ENCODE measurements at regions of chr6 and their contacts with region 1.

Region 1: DNA sequence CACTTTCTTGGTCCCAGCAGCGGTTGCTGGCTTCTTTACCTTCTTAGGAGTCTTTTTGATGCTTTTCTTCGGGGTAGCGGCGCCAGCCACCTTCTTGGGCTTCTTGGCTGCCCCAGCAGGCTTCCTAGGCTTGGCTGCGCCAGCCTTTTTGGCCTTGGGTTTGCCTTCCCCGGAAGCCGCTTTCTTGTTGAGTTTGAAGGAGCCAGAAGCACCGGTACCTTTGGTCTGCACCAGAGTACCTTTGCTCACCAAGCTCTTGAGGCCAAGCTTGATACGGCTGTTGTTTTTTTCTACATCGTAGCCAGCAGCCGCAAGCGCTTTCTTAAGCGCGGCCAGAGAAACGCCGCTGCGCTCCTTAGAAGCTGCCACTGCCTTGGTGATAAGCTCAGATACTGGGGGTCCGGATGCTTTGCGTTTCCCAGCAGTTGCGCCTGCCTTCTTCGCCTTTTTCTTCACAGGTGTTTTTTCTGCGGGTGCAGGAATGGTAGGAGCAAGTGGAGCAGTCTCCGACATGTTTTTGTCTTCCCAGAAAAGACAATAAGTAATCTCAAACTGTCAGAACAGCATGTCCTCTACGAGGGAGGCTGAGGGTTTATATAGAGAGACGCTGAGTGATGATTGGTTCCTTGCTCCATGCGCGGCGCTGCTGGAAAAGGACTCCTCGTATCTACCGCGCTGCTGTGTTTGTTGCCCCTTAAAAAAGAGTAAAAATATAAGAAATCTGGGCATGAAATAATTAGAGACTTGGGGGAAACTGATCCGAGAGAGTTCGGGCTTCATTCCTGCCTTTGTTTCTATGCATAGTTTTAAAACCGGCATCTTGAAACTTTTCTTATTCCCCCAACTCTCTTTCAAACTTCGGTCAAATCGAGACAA is 130.3 kb upstream of the BTN3A2 start:
- DNase-seq: peak; percentile 46 to 96 (median 67)
- ATAC-seq: peak; percentile 73
- H3K4me3 ChIP-seq: peak overlapping the region; percentile 66
- H3K4me3 Mint-ChIP-seq: peak overlapping the region; percentile 100
- H3K27ac ChIP-seq: peak overlapping the region; percentile 78 to 87
- H3K27ac Mint-ChIP-seq: peak overlapping the region; percentile 99
- H3K4me1 ChIP-seq: peaks cover 19% of the 10 kb centered on the region
- H3K4me1 Mint-ChIP-seq: peaks cover 42% of the 10 kb centered on the region
- H3K27me3 ChIP-seq: no peaks in the 10 kb centered on the region
- H3K27me3 Mint-ChIP-seq: peaks cover 8% of the 10 kb centered on the region
- CTCF ChIP-seq: no peak

Region 2: GRCh38 chr6:25907475-25908014 is 327.1 kb before region 1 on chr6:
- CTCF ChIA-PET with region 1: no interaction called
- POLR2A ChIA-PET with region 1: no interaction called
- intact Hi-C with region 1: no loop called
- DNase-seq: no peak
- ATAC-seq: no peak
- H3K4me3 ChIP-seq: no peak overlapping the region
- H3K4me3 Mint-ChIP-seq: no peak overlapping the region
- H3K27ac ChIP-seq: no peak overlapping the region
- H3K27ac Mint-ChIP-seq: no peak overlapping the region
- H3K4me1 ChIP-seq: no peaks in the 10 kb centered on the region
- H3K4me1 Mint-ChIP-seq: no peaks in the 10 kb centered on the region
- H3K27me3 ChIP-seq: peaks cover 0 to 5% of the 10 kb centered on the region in 2 experiments
- H3K27me3 Mint-ChIP-seq: peaks cover 19% of the 10 kb centered on the region
- CTCF ChIP-seq: no peak

Region 3: DNA sequence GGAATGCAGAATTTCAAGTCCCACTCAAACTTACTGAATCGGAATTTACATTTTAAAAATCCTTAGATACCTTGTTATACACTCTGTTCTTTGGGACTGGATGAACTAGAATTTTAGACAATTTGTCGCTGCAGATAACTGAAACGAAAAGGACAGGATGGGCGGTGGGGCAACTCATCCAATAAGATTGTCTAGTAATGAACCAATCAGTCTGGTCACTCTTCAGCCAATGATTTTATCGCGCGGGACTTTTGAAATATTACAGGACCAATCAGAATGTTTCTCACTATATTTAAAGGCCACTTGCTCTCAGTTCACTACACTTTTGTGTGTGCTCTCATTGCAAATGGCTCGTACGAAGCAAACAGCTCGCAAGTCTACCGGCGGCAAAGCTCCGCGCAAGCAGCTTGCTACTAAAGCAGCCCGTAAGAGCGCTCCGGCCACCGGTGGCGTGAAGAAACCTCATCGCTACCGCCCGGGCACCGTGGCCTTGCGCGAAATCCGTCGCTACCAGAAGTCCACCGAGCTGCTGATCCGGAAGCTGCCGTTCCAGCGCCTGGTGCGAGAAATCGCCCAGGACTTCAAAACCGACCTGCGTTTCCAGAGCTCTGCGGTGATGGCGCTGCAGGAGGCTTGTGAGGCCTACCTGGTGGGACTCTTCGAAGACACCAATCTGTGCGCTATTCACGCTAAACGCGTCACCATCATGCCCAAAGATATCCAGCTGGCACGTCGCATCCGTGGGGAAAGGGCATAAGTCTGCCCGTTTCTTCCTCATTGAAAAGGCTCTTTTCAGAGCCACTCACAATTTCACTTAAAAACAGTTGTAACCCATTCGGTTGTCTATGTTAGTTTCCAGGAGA is 189.4 kb before region 1 on chr6:
- CTCF ChIA-PET with region 1: no interaction called
- POLR2A ChIA-PET with region 1: interaction called, 49 read pairs
- intact Hi-C with region 1: no loop called
- DNase-seq: peak; percentile 49 to 96 (median 74)
- ATAC-seq: peak; percentile 55
- H3K4me3 ChIP-seq: peak overlapping the region; percentile 70
- H3K4me3 Mint-ChIP-seq: peak overlapping the region; percentile 97
- H3K27ac ChIP-seq: peak overlapping the region; percentile 71 to 91
- H3K27ac Mint-ChIP-seq: peak overlapping the region; percentile 94
- H3K4me1 ChIP-seq: peaks cover 21% of the 10 kb centered on the region
- H3K4me1 Mint-ChIP-seq: peaks cover 28% of the 10 kb centered on the region
- H3K27me3 ChIP-seq: no peaks in the 10 kb centered on the region
- H3K27me3 Mint-ChIP-seq: no peaks in the 10 kb centered on the region
- CTCF ChIP-seq: no peak

Region 4: DNA sequence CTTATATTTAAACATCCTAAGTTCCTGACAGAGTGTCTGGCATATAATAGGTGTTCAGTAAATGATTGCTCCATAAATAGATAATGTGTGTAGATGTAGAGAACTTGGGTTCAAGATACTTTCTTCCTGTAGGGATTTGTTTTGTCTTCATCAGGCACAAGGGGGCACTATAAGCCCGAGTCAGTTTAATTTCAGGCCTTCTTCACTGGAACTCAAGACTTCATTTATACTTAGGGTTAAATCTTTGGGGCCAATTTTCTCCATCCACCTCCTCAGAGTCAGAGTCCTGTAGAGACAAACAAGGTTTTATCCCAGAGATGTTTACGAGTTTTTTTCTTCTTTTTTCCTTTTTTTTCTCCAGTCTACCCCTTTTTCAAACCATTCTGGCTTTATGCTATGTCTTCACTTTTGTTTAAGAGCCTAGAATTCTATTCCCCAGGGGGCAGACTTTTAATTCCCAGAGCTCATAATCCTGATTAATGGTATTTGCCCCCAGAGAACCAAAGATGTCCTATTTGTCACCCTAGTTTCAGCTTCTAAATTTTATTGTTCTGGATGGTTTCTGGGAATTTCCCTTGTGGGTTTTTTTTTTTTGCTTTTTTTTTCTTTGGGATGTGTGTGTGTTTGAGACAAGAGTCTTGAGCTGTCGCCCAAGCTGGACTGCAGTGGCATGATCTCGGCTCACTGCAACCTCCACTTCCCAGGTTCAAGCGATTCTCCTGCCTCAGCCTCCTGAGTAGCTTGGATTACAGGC is 59.1 kb before region 1 on chr6:
- CTCF ChIA-PET with region 1: interaction called, 3 read pairs
- POLR2A ChIA-PET with region 1: interaction called, 116 read pairs
- intact Hi-C with region 1: no loop called
- DNase-seq: peak in 11 of 14 experiments; percentile 13 to 85 (median 54)
- ATAC-seq: no peak
- H3K4me3 ChIP-seq: no peak overlapping the region
- H3K4me3 Mint-ChIP-seq: peak overlapping the region; percentile 83
- H3K27ac ChIP-seq: peak overlapping the region in 1 of 2 donors; percentile 41
- H3K27ac Mint-ChIP-seq: peak overlapping the region; percentile 93
- H3K4me1 ChIP-seq: peaks cover 17% of the 10 kb centered on the region
- H3K4me1 Mint-ChIP-seq: peaks cover 53% of the 10 kb centered on the region
- H3K27me3 ChIP-seq: no peaks in the 10 kb centered on the region
- H3K27me3 Mint-ChIP-seq: no peaks in the 10 kb centered on the region
- CTCF ChIP-seq: peak; percentile 87

Region 5: GRCh38 chr6:26249957-26250697 is 15.5 kb after region 1 on chr6:
- CTCF ChIA-PET with region 1: interaction called, 42 read pairs
- POLR2A ChIA-PET with region 1: interaction called, 33 read pairs
- intact Hi-C with region 1: loop called in 1 of 2 experiments (anchors 1 kb)
- DNase-seq: peak; percentile 64 to 93 (median 74)
- ATAC-seq: peak; percentile 78
- H3K4me3 ChIP-seq: peak overlapping the region; percentile 75
- H3K4me3 Mint-ChIP-seq: peak overlapping the region; percentile 97
- H3K27ac ChIP-seq: peak overlapping the region; percentile 72 to 80
- H3K27ac Mint-ChIP-seq: peak overlapping the region; percentile 88
- H3K4me1 ChIP-seq: peaks cover 29% of the 10 kb centered on the region
- H3K4me1 Mint-ChIP-seq: peaks cover 44% of the 10 kb centered on the region
- H3K27me3 ChIP-seq: no peaks in the 10 kb centered on the region
- H3K27me3 Mint-ChIP-seq: no peaks in the 10 kb centered on the region
- CTCF ChIP-seq: no peak

Region 6: DNA sequence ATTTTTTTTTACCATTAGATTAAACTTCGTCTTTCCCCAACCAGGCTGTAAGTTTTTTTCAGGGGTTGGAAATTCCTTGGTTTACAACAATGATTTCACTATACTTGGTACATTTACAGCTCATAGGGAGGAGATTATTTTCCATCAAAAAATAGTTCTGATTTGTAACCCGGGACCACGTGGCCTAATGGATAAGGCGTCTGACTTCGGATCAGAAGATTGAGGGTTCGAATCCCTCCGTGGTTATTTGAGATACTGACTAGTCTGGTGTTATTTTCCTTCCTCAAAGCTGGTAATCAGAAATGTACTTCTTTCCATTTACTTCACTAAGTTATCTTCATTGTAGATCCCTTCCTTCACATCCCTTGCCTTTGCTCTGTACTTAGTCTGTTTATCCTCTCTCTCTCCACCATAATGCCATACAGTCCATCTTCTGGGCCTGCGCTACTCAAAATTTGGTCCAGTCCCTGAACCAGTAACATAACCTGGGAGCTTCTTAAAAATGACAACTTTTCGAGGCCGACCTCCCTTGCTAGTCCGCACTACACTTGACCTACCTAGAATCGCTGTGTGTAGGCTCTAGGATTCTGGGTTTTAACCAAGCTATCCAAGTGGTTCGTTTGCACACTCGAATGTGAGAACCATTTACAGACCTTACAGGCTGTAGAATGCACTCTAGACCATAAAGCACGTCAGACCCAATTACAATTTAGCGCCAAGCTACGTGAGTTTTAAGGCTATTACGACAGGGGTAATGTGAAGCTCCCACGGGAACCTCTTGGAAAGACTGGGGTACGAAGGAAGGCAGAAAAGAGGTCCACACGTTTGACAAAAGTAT is 88.2 kb after region 1 on chr6:
- CTCF ChIA-PET with region 1: no interaction called
- POLR2A ChIA-PET with region 1: interaction called, 12 read pairs
- intact Hi-C with region 1: no loop called
- DNase-seq: peak in 10 of 14 experiments; percentile 20 to 88 (median 52)
- ATAC-seq: peak; percentile 75
- H3K4me3 ChIP-seq: peak overlapping the region; percentile 54
- H3K4me3 Mint-ChIP-seq: peak overlapping the region; percentile 96
- H3K27ac ChIP-seq: no peak overlapping the region
- H3K27ac Mint-ChIP-seq: peak overlapping the region; percentile 93
- H3K4me1 ChIP-seq: peaks cover 23% of the 10 kb centered on the region
- H3K4me1 Mint-ChIP-seq: peaks cover 30% of the 10 kb centered on the region
- H3K27me3 ChIP-seq: no peaks in the 10 kb centered on the region
- H3K27me3 Mint-ChIP-seq: peaks cover 35% of the 10 kb centered on the region
- CTCF ChIP-seq: no peak

Region 7: DNA sequence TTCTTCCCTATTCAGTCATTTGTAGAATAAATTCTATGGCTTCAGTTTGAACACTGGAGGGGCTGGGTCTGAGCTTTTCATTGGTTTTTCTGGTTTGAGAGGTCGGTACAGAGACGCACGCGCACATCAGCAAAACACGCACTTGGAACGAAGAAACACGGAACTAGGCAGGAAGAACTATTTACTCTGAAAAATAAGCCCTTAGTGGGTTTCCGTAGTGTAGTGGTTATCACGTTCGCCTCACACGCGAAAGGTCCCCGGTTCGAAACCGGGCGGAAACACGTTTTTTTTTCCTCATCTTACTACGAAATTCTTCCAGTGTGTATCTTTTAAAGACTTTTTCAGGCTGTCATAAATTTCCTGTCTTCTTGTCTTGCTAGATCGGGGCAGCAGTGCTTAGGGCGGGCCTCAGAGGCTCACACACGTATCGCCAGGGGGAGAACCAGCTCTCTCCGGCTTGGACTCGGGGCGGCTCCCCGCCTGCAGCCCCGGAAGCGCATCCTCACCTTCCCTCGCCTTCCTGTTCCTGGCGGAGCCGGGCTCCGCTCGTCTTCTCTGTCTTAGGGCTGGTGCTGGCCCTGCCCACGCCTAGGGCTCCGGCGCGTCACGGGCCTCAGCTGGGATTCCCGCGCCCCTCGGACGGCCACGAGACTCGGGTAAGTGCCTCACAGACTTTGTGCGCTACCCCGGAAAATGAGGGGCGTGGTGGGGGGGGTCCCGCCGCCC is 303.4 kb after region 1 on chr6 and contains the start of gene HMGN4:
- CTCF ChIA-PET with region 1: no interaction called
- POLR2A ChIA-PET with region 1: interaction called, 12 read pairs
- intact Hi-C with region 1: no loop called
- DNase-seq: peak; percentile 66 to 97 (median 76)
- ATAC-seq: peak; percentile 70
- H3K4me3 ChIP-seq: peak within 1 kb of the TSS; percentile 93
- H3K4me3 Mint-ChIP-seq: peak within 1 kb of the TSS; percentile 94
- H3K27ac ChIP-seq: peak within 1 kb of the TSS; percentile 84 to 91
- H3K27ac Mint-ChIP-seq: peak within 1 kb of the TSS; percentile 98
- H3K4me1 ChIP-seq: peaks cover 51% of the 10 kb centered on the region
- H3K4me1 Mint-ChIP-seq: peaks cover 57% of the 10 kb centered on the region
- H3K27me3 ChIP-seq: no peaks in the 10 kb centered on the region
- H3K27me3 Mint-ChIP-seq: peaks cover 13% of the 10 kb centered on the region
- CTCF ChIP-seq: no peak
- total RNA-seq, gene HMGN4: 22.7 to 24.8 TPM

Region 8: GRCh38 chr6:26739811-26740210 is 505.2 kb after region 1 on chr6:
- CTCF ChIA-PET with region 1: no interaction called
- POLR2A ChIA-PET with region 1: no interaction called
- intact Hi-C with region 1: no loop called
- DNase-seq: no peak
- ATAC-seq: no peak
- H3K4me3 ChIP-seq: no peak overlapping the region
- H3K4me3 Mint-ChIP-seq: no peak overlapping the region
- H3K27ac ChIP-seq: no peak overlapping the region
- H3K27ac Mint-ChIP-seq: no peak overlapping the region
- H3K4me1 ChIP-seq: no peaks in the 10 kb centered on the region
- H3K4me1 Mint-ChIP-seq: no peaks in the 10 kb centered on the region
- H3K27me3 ChIP-seq: peaks cover 20 to 27% of the 10 kb centered on the region in 2 experiments
- H3K27me3 Mint-ChIP-seq: peaks cover 43% of the 10 kb centered on the region
- CTCF ChIP-seq: no peak

Region 9: GRCh38 chr6:27825025-27825793 is 1590.5 kb after region 1 on chr6:
- CTCF ChIA-PET with region 1: no interaction called
- POLR2A ChIA-PET with region 1: interaction called, 18 read pairs
- intact Hi-C with region 1: no loop called
- DNase-seq: peak in 2 of 14 experiments; percentile 27 to 38
- ATAC-seq: no peak
- H3K4me3 ChIP-seq: peak overlapping the region; percentile 82
- H3K4me3 Mint-ChIP-seq: peak overlapping the region; percentile 90
- H3K27ac ChIP-seq: peak overlapping the region; percentile 77 to 87
- H3K27ac Mint-ChIP-seq: peak overlapping the region; percentile 99
- H3K4me1 ChIP-seq: peaks cover 8% of the 10 kb centered on the region
- H3K4me1 Mint-ChIP-seq: peaks cover 38% of the 10 kb centered on the region
- H3K27me3 ChIP-seq: no peaks in the 10 kb centered on the region
- H3K27me3 Mint-ChIP-seq: no peaks in the 10 kb centered on the region
- CTCF ChIP-seq: no peak

Measured in CD4-positive, alpha-beta T cell (primary cell).